Activated B cell treated with CpG ODN at 0.5 μM for 24 hours (primary cell): ENCODE measurements at regions of chr18 and their contacts with region 1.

Region 1: DNA sequence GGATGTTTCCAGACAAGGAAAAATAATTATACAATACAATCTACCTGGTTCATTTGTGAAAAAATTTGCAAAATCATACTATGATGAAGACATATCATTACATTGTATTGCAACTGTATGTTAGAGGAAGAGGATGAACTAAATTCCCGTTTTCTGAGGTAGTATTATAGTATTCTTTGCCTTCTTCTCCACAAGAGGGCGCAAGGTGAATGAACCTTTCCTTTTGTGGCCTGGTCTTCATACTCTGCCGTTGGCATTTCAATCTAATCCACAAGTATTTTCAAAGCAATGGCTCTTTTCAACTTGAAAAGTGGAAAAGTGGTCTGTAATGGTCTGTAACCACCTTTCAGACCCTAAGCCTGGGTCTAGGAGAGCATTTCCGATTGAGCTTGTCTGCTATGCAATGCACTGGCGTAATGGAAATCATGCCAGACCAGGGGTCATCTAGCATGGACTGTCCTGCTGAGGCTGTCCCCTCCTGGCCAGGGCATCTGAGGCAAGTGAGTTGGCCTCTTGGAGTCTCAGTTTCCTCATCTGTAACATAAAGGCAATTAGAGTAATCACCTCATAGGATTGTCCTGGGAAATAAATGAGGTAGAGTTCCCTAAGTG is 30.8 kb upstream of the ZNF396 start:
- DNase-seq: no peak
- ATAC-seq: peak; percentile 29
- H3K4me3 Mint-ChIP-seq: no peak overlapping the region
- H3K27ac Mint-ChIP-seq: no peak overlapping the region
- H3K4me1 Mint-ChIP-seq: peaks cover 44% of the 10 kb centered on the region
- H3K27me3 Mint-ChIP-seq: no peaks in the 10 kb centered on the region
- CTCF ChIP-seq: peak; percentile 67

Region 2: DNA sequence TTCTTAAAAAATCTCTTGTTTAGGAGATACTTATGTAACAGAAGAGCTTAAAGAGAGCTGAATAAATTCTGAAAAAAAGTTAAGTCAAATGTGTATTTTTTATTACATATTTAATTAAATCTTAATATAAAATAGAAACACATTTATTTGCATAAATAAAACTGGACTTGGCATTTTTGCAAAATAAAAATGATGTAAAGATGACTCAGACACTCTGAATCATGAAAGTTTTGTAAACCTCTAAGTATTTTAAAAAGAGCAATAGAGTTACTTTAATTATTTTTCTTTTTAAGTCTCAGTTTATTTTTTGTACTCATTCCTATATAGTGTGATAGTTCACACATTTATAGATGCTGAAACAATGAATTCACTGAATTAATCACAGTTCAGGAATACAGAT is 807.9 kb before region 1 on chr18:
- CTCF ChIA-PET with region 1: no interaction called
- POLR2A ChIA-PET with region 1: no interaction called
- intact Hi-C with region 1: no loop called
- DNase-seq: no peak
- ATAC-seq: no peak
- H3K4me3 Mint-ChIP-seq: no peak overlapping the region
- H3K27ac Mint-ChIP-seq: no peak overlapping the region
- H3K4me1 Mint-ChIP-seq: no peaks in the 10 kb centered on the region
- H3K27me3 Mint-ChIP-seq: no peaks in the 10 kb centered on the region
- CTCF ChIP-seq: no peak

Region 3: DNA sequence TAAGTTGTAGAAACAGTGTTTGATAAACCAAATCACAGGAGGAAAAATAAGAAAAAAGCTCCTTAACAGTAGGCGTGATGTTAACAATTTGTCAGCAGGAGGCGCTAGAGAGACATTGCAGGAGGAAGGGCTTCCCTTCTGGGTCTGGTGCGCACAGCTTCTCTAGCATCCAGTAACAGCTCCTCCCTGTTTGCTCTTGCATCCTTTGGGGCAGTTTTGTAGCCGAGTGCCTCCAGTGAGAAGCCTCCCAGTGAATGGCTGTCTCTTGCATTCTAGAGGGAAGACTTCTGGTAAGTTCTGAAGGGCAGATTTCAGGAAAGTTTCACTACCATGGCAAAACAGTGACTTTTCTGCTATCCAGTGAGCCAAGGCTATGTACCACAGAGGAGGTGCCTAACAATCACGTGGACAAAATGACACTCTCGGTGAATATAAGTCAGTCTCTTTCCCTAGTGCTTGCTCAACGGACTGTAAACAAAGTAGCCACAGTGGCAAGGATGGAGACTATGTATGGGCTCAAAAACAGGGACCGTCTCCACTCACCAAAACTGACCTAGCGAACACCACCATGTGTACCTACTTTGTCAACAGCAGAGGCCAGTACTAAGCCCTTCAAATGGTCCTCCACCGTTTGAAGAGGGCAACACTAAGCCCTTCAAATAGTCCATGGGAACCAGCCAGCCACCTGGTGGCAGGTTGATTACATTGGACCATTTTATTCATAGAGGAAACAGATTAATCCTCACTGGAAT is 21.2 kb before region 1 on chr18:
- CTCF ChIA-PET with region 1: interaction called, 10 read pairs
- POLR2A ChIA-PET with region 1: no interaction called
- intact Hi-C with region 1: no loop called
- DNase-seq: no peak
- ATAC-seq: peak; percentile 95
- H3K4me3 Mint-ChIP-seq: no peak overlapping the region
- H3K27ac Mint-ChIP-seq: no peak overlapping the region
- H3K4me1 Mint-ChIP-seq: peaks cover 6% of the 10 kb centered on the region
- H3K27me3 Mint-ChIP-seq: peaks cover 18% of the 10 kb centered on the region
- CTCF ChIP-seq: no peak

Region 4: GRCh38 chr18:35513181-35513936 is 105.4 kb after region 1 on chr18:
- CTCF ChIA-PET with region 1: interaction called, 5 read pairs
- POLR2A ChIA-PET with region 1: interaction called, 3 read pairs
- intact Hi-C with region 1: loop called (anchors 1 kb)
- DNase-seq: no peak
- ATAC-seq: no peak
- H3K4me3 Mint-ChIP-seq: no peak overlapping the region
- H3K27ac Mint-ChIP-seq: no peak overlapping the region
- H3K4me1 Mint-ChIP-seq: peaks cover 13% of the 10 kb centered on the region
- H3K27me3 Mint-ChIP-seq: no peaks in the 10 kb centered on the region
- CTCF ChIP-seq: no peak

Region 5: GRCh38 chr18:35624146-35624545 is 216.2 kb after region 1 on chr18:
- CTCF ChIA-PET with region 1: no interaction called
- POLR2A ChIA-PET with region 1: no interaction called
- intact Hi-C with region 1: no loop called
- DNase-seq: no peak
- ATAC-seq: peak; percentile 31
- H3K4me3 Mint-ChIP-seq: no peak overlapping the region
- H3K27ac Mint-ChIP-seq: no peak overlapping the region
- H3K4me1 Mint-ChIP-seq: peaks cover 33% of the 10 kb centered on the region
- H3K27me3 Mint-ChIP-seq: no peaks in the 10 kb centered on the region
- CTCF ChIP-seq: no peak

Region 6: DNA sequence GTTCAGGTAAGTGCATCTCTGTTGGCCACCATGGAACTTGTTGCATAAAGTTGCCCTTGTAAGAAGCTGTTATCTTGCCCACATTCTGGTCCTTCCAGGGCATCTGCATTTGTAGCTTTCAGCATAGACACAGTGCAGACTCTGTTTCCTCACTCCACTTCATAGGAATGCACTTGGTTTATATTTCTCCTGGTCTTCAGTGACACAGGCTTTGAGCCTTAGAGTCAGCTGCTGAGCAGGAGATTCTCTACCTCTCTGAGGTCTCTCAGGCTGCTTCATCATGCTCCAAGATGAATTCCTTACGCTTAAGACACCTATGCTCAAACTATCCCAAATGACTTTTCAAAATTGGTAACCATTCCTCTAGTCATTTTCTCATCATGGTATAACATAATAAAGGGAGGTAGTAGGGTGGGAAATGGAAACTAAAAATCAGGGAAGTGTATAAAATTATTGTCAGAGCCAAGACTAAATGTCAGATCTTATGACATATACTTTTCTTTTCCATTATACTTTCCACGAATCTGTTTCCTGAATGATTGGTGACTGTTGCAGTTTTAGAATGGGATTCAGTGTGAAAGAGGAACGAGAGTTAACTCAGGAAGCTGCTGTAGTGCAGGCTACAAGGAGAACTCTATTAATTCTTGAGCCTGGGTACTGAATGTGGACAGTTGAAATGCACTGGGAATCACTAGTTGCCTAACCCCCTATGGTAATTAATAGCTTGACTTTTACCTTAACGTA is 245.6 kb after region 1 on chr18:
- CTCF ChIA-PET with region 1: no interaction called
- POLR2A ChIA-PET with region 1: no interaction called
- intact Hi-C with region 1: loop called (anchors 5 kb)
- DNase-seq: no peak
- ATAC-seq: no peak
- H3K4me3 Mint-ChIP-seq: no peak overlapping the region
- H3K27ac Mint-ChIP-seq: peak overlapping the region; percentile 25
- H3K4me1 Mint-ChIP-seq: peaks cover 18% of the 10 kb centered on the region
- H3K27me3 Mint-ChIP-seq: no peaks in the 10 kb centered on the region
- CTCF ChIP-seq: no peak

Region 7: DNA sequence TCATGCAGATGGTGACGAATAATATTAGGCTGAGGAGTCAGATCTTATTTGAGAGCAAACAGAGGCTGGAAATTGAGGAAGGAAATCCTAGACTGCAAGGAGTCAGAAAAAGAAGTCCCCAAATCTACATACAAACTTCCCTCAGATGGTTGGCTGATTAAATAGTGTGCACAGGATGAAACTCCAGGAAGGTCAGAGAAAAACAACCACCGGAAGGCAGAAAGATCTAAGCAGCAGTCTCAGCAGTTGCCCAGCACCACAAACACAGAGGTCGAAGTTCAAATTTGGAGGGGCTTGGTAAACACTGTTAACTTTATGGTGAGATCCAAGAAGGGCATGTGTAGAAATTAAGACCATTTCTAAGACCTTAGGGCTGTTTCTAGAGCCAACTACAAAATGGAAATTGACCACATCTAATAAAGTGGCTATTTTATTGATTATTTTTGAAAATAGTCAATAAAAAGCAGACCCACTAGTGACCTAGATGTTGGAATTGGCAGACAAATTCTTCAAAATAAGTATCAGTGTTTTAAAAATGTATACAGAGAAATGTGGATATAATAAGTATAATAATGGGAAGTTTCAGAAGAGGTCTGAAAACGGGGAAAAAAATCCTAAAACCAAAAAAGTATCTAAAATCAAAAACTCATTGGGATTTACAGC is 308.3 kb after region 1 on chr18:
- CTCF ChIA-PET with region 1: no interaction called
- POLR2A ChIA-PET with region 1: no interaction called
- intact Hi-C with region 1: loop called (anchors 5 kb)
- DNase-seq: no peak
- ATAC-seq: no peak
- H3K4me3 Mint-ChIP-seq: no peak overlapping the region
- H3K27ac Mint-ChIP-seq: no peak overlapping the region
- H3K4me1 Mint-ChIP-seq: peaks cover 2% of the 10 kb centered on the region
- H3K27me3 Mint-ChIP-seq: no peaks in the 10 kb centered on the region
- CTCF ChIP-seq: no peak

Region 8: DNA sequence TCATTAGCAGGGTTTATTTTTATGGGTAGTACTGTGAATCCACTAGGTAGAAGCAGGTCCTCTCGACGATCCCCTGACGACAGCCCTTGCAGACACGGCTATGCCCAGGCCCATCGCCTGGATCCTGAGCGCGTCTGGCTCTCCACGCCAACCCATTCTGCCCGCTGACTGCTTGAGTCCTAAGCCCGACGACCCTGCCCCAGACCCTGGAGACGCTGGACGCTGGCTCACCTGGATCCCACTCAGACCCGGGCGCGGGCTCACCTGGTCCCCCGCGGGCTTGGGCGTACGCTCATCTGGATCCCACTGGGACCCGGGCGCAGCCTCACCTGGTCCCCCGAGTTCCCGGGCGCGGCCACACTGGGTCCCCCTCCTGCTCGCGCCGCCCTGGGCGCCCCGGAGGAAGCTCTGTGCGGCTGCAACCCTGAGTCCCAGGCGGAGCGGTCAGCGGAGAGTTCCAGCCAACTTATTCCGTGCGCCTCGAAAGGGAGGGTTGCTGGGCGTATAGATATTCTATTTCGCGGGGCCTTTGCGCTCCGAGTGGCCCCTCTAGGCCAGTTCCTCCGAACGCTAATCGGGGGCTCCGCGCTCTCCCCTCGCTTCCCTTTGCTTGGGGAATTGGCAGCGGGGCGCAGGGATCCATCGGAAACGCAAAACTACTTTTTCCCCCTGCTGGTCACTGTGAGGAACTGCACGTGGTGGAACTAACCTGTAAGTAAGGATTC is 542.1 kb after region 1 on chr18:
- CTCF ChIA-PET with region 1: interaction called, 3 read pairs
- POLR2A ChIA-PET with region 1: no interaction called
- intact Hi-C with region 1: loop called (anchors 1 kb)
- DNase-seq: peak; percentile 43
- ATAC-seq: peak; percentile 85
- H3K4me3 Mint-ChIP-seq: peak overlapping the region; percentile 82
- H3K27ac Mint-ChIP-seq: no peak overlapping the region
- H3K4me1 Mint-ChIP-seq: peaks cover 8% of the 10 kb centered on the region
- H3K27me3 Mint-ChIP-seq: peaks cover 27% of the 10 kb centered on the region
- CTCF ChIP-seq: peak; percentile 98